Activated CD8-positive, alpha-beta T cell treated with anti-CD3 and anti-CD28 coated beads, Interleukin-2, amount 10 ng/mL, durations not matched to agents 7 days and 5 days (primary cell): ENCODE measurements at regions of chr7 and their contacts with region 1.

Region 1: GRCh38 chr7:12524794-12525386 is 45.6 kb upstream of the SCIN start:
- DNase-seq: no peak
- ATAC-seq: no peak
- H3K4me3 Mint-ChIP-seq: no peak overlapping the region
- H3K27ac Mint-ChIP-seq: no peak overlapping the region
- H3K4me1 Mint-ChIP-seq: no peaks in the 10 kb centered on the region
- H3K27me3 Mint-ChIP-seq: peaks cover 17% of the 10 kb centered on the region

Region 2: DNA sequence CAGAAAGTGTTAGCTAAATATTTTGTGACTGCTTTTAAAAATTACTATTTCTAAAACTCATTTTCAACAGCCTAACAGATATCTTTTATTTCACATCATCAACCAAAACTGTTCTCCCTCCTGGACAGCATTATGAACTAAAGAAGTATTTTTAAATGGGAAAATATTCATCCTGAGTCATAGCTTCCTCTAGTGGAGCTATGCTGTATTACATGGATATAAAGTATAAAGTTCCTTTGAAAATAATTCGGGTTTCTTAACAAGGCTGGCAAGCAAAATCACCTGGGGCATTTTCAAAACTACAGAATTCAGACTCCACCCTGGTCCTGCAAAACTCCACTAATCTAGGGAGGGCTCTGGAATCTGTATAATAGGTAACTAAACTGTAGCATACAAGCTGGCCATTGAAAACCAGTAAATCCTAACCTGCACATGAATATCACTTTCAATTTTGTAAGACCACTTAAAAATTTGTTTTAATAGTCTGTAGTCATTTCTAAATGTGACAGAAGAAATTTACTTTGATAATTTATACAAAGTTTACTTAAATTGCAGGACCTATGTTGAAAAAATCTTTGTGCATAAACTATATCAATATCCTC is 99.1 kb after region 1 on chr7:
- CTCF ChIA-PET with region 1: interaction called, 21 read pairs
- POLR2A ChIA-PET with region 1: no interaction called
- DNase-seq: no peak
- ATAC-seq: no peak
- H3K4me3 Mint-ChIP-seq: no peak overlapping the region
- H3K27ac Mint-ChIP-seq: no peak overlapping the region
- H3K4me1 Mint-ChIP-seq: no peaks in the 10 kb centered on the region
- H3K27me3 Mint-ChIP-seq: peaks cover 8% of the 10 kb centered on the region

Region 3: DNA sequence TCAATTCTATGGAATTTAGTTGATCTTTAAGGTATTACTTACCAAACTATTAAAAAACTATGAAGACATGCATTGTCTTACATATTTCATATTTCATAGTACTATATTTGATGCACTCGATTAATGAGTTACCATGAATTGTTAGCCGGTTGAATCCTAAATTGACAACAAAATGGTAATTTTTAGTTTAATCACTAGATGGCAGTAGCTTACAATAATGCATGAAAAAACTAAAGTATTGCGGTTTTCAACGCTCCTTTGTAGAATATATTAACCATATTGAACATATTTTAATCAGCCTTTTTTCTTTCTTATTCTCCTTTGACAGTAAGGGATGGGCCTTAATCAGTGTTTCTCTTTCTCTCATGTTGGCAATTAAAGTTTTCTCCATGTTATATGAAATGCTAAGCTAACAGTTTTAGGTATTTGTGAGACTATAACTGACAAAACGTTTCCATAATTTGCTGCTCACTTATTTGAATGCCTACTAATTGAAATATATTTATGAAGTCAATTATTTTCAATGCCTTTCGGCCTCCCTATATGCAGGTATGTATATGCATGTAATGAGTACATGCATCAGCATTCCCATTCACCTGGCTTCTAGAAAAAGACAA is 114.1 kb after region 1 on chr7:
- CTCF ChIA-PET with region 1: interaction called, 10 read pairs
- POLR2A ChIA-PET with region 1: no interaction called
- DNase-seq: no peak
- ATAC-seq: no peak
- H3K4me3 Mint-ChIP-seq: no peak overlapping the region
- H3K27ac Mint-ChIP-seq: no peak overlapping the region
- H3K4me1 Mint-ChIP-seq: peaks cover 4% of the 10 kb centered on the region
- H3K27me3 Mint-ChIP-seq: peaks cover 4% of the 10 kb centered on the region